H1 (cell line): ENCODE measurements at regions of chr2 and their contacts with region 1.

Region 1: DNA sequence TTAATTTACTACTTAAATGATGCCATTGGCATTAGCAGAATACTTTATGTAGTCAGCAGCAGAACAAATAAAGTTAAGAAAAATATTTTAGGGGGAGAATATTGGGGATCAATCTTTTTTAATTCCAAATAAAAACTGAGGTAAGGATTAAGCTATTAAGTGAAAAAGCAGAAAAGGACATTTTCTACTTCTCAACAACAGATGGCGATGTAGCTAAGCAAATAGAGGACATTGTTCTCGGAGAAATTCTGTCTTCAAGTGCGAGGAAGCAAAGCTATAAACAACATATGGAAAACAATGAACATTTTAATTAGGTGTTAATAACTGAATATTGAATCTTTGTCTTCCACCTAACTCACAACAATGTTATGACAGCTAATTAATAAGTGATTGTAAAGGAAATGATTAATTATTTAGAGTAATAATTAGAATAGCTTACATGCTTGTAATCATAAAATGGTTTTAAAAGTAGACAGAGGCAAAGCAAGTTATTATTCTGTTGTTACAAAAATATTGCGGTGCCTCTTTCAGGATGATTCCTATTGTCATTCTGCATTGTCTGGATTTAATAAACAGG is 32.9 kb upstream of the CCDC93 start:
- DNase-seq: no peak
- H3K4me3 ChIP-seq: no peak overlapping the region
- H3K27ac ChIP-seq: no peak overlapping the region
- H3K4me1 ChIP-seq: peaks cover 0 to 2% (median 0%) of the 10 kb centered on the region in 4 experiments; a peak in 2 of 7 replicates
- H3K27me3 ChIP-seq: no peaks in the 10 kb centered on the region
- CTCF ChIP-seq: peak in 2 of 3 experiments; percentile 49 to 60; a peak in 2 of 4 replicates
- EP300 ChIP-seq: no peak
- POLR2A ChIP-seq: no peak
- RAD21 ChIP-seq: peak; percentile 73 to 79

Region 2: GRCh38 chr2:117931978-117932377 is 114.7 kb before region 1 on chr2:
- CTCF ChIA-PET with region 1: no interaction called
- POLR2A ChIA-PET with region 1: no interaction called
- DNase-seq: no peak
- H3K4me3 ChIP-seq: no peak overlapping the region
- H3K27ac ChIP-seq: no peak overlapping the region
- H3K4me1 ChIP-seq: no peaks in the 10 kb centered on the region; a peak in 1 of 7 replicates
- H3K27me3 ChIP-seq: no peaks in the 10 kb centered on the region
- CTCF ChIP-seq: no peak
- EP300 ChIP-seq: no peak
- POLR2A ChIP-seq: no peak
- RAD21 ChIP-seq: no peak

Region 3: DNA sequence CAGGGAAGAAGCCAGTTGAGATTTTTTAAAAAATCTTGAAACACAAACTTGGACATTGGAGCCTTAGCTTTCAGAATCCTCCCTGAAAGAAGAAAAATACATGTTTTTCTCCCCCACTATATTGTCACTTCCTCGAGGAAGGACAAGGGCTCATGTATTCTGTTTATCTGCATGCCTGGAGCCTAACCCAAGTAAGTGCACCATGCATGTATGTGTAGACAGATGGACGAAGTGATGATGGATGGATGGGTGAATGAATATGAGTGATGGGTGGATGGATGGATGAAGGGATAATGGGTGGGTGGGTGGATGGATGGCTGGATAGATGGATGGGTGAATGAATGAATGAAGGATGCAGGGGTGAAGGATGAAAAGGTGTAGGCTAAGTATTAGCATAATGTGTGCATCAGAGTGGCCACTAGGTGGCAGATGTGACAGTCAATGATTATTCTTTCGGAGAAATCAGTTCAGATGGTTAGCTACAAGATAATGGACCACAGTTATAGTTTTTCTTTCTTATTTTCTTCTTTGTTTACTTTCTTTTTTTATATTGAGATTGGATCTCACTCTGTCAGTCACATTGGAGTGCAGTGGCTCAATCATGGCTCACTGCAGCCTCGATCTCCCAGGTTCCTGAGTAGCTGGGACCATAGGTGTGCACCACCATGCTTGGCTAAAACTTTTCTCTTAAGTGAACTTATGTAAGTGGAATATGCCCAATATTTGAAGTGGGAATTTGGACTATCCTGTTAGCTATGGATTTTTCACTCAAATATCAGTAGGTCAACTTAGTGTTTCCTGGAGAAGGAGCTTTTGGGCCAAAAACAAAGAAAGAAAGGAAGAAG is 14.3 kb before region 1 on chr2:
- CTCF ChIA-PET with region 1: interaction called, 22 read pairs
- POLR2A ChIA-PET with region 1: no interaction called
- DNase-seq: peak in 1 of 2 experiments; percentile 52
- H3K4me3 ChIP-seq: no peak overlapping the region
- H3K27ac ChIP-seq: no peak overlapping the region
- H3K4me1 ChIP-seq: peaks cover 0 to 8% (median 1%) of the 10 kb centered on the region in 4 experiments; a peak in 2 of 7 replicates
- H3K27me3 ChIP-seq: peaks cover 0 to 1% (median 0%) of the 10 kb centered on the region in 4 experiments; a peak in 1 of 7 replicates
- CTCF ChIP-seq: peak in 2 of 3 experiments; percentile 55 to 83; a peak in 3 of 4 replicates
- EP300 ChIP-seq: no peak
- POLR2A ChIP-seq: no peak
- RAD21 ChIP-seq: peak; percentile 43 to 55

Region 4: DNA sequence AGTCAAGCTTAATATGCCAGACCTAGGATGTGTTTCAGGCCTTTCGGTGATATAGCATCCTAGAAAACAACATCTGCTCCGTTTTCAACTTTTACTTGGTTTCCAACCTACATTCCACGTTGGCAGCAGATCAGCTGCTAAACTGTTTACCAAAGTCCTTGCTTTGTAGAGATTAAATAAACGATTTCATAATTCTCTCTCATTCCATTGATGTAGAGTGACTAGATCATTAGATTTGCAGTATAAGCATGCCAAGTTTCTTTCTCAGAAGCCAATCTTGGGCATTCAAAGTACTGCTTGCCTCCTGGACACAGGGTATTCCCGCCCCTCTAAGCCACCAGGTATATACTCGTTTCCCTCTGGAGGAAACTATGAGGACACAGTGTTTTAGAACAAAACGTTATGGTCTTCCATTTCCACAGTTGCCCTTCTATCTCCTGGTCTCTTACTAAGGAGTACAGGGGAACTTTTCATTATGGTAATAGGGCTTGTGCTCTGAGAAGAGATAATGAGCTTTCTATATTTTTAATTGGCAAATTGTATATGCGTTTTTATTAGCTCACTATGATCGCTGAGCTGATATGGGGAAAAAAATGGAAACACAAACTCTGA is 31.0 kb after region 1 on chr2:
- CTCF ChIA-PET with region 1: interaction called, 12 read pairs
- POLR2A ChIA-PET with region 1: no interaction called
- DNase-seq: no peak
- H3K4me3 ChIP-seq: no peak overlapping the region
- H3K27ac ChIP-seq: no peak overlapping the region
- H3K4me1 ChIP-seq: no peaks in the 10 kb centered on the region
- H3K27me3 ChIP-seq: no peaks in the 10 kb centered on the region
- CTCF ChIP-seq: no peak
- EP300 ChIP-seq: no peak
- POLR2A ChIP-seq: no peak
- RAD21 ChIP-seq: no peak